Activated T-helper 1 cell treated with anti-CD3 and anti-CD28 coated beads, Interleukin-12 subunit alpha, Interleukin-12 subunit beta, Interleukin-2, Interleukin-4 antibody, amounts not matched to agents 30 ng/mL and 10 ng/mL and 1 ng/mL, durations not matched to agents 14 hours and 24 hours and 36 hours (primary cell): ENCODE measurements at regions of chr3 and their contacts with region 1.

Region 1: GRCh38 chr3:30606301-30607031 is at the start of gene TGFBR2:
- DNase-seq: peak; percentile 81
- H3K4me3 Mint-ChIP-seq: peak within 1 kb of the TSS; percentile 97
- H3K27ac Mint-ChIP-seq: peak within 1 kb of the TSS; percentile 98
- H3K4me1 Mint-ChIP-seq: peaks cover 72% of the 10 kb centered on the region
- H3K27me3 Mint-ChIP-seq: no peaks in the 10 kb centered on the region
- total RNA-seq, gene TGFBR2: 58.2 and 59.6 TPM in 2 replicates

Region 2: DNA sequence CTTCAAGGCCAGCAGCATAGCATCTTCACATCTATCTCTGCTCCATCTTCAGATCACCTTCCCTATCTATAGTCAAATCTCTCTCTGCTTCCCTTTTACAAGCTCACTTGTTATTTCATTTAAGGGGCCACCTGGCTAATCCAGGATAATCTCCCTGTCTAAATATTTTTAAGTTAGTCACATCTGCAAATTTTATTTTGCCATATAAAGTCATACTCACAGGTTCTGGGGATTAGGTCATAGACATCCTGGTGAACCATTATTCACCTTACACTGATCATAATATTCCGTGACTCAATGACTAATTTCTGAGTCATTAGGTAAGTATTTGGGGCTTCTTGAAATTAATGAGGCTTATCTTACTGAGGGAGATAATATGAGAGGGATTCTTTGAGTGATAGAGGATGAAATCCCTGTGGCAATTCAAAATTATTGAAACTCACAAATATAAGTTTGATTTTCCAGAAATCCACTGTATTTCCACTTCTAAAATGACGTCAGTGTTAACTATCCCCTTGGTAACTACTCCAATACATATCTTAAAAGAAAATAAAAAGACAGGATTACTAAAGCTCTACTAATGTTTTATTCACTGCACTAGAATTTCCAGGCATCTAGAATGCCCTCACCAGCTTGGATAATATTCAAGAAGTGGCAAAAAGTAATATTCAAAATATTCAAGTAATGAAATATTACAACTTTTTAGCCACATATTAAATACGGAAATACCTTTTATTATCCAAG is 1419.3 kb before region 1 on chr3:
- intact Hi-C with region 1: loop called (anchors 10 kb)
- DNase-seq: no peak
- H3K4me3 Mint-ChIP-seq: no peak overlapping the region
- H3K27ac Mint-ChIP-seq: peak overlapping the region; percentile 8
- H3K4me1 Mint-ChIP-seq: peaks cover 36% of the 10 kb centered on the region
- H3K27me3 Mint-ChIP-seq: no peaks in the 10 kb centered on the region

Region 3: GRCh38 chr3:30199096-30199759 is 407.2 kb before region 1 on chr3:
- intact Hi-C with region 1: loop called (anchors 2 kb)
- DNase-seq: peak; percentile 31
- H3K4me3 Mint-ChIP-seq: no peak overlapping the region
- H3K27ac Mint-ChIP-seq: no peak overlapping the region
- H3K4me1 Mint-ChIP-seq: peaks cover 14% of the 10 kb centered on the region
- H3K27me3 Mint-ChIP-seq: no peaks in the 10 kb centered on the region

Region 4: GRCh38 chr3:30353711-30354467 is 252.6 kb before region 1 on chr3:
- intact Hi-C with region 1: loop called (anchors 1 kb)
- DNase-seq: peak; percentile 70
- H3K4me3 Mint-ChIP-seq: peak overlapping the region; percentile 27
- H3K27ac Mint-ChIP-seq: peak overlapping the region; percentile 70
- H3K4me1 Mint-ChIP-seq: peaks cover 85% of the 10 kb centered on the region
- H3K27me3 Mint-ChIP-seq: peaks cover 14% of the 10 kb centered on the region

Region 5: DNA sequence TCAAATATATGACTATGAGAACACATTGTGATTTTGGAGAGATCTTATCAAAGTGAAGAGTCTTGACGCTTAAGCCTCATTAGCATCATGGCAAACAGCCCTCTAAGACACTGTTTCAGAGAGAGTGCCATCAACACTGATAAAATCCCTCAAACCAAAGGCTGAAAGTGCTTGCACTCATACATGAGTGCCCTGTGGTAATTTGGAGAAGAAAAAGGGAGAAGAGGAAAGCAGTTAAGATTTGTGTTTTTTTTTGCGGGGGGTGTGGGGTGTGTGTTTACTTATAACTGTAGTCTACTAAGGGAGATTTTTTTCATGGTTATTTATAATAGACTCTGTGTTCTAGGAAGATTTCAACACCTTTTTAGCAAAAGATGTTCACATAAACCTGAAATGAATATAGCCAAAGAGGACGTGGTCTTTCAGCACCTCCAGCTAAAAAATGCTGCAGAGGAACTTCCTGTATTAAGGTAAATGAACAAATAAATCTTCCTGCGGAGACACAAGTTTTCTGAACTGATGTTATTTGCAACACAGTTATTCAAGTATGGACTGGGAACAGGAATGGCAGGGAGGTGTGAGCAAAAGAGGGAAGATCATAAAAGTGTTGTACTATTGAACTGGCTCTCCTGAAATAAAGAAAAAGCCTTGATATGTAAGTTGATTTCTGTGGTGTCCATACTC is 82.0 kb before region 1 on chr3:
- intact Hi-C with region 1: loop called (anchors 5 kb)
- DNase-seq: no peak
- H3K4me3 Mint-ChIP-seq: peak overlapping the region; percentile 3
- H3K27ac Mint-ChIP-seq: peak overlapping the region; percentile 53
- H3K4me1 Mint-ChIP-seq: peaks cover 17% of the 10 kb centered on the region
- H3K27me3 Mint-ChIP-seq: peaks cover 3% of the 10 kb centered on the region

Region 6: GRCh38 chr3:30628901-30629590 is 22.6 kb after region 1 on chr3:
- intact Hi-C with region 1: loop called (anchors 1 kb)
- DNase-seq: no peak
- H3K4me3 Mint-ChIP-seq: peak overlapping the region; percentile 66
- H3K27ac Mint-ChIP-seq: peak overlapping the region; percentile 98
- H3K4me1 Mint-ChIP-seq: peaks cover 83% of the 10 kb centered on the region
- H3K27me3 Mint-ChIP-seq: no peaks in the 10 kb centered on the region

Region 7: DNA sequence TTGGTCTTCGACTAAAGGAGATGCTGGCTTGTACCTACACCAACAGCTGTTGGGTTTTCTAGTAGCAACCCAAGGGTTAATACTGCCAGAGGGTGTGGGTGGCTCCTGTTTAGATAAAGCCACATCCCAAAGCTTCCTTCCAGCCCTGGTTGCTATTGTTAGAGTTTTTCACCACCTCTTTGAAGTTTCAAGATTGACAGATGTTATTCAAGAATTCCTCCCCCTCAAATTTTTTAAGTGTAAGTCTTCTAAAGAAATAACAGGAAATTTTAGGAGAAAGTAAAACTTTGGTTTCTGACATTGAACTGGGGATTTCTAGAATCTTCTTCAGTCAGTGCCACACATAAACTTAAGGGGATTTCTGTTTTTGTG is 60.8 kb after region 1 on chr3:
- intact Hi-C with region 1: loop called (anchors 1 kb)
- DNase-seq: peak; percentile 39
- H3K4me3 Mint-ChIP-seq: no peak overlapping the region
- H3K27ac Mint-ChIP-seq: peak overlapping the region; percentile 83
- H3K4me1 Mint-ChIP-seq: peaks cover 97% of the 10 kb centered on the region
- H3K27me3 Mint-ChIP-seq: no peaks in the 10 kb centered on the region

Region 8: GRCh38 chr3:31790193-31791089 is 1184.0 kb after region 1 on chr3:
- intact Hi-C with region 1: no loop called
- DNase-seq: no peak
- H3K4me3 Mint-ChIP-seq: no peak overlapping the region
- H3K27ac Mint-ChIP-seq: no peak overlapping the region
- H3K4me1 Mint-ChIP-seq: no peaks in the 10 kb centered on the region
- H3K27me3 Mint-ChIP-seq: no peaks in the 10 kb centered on the region